ENCODE measurements at regions of chr5 and their contacts with region 1.

Region 1: DNA sequence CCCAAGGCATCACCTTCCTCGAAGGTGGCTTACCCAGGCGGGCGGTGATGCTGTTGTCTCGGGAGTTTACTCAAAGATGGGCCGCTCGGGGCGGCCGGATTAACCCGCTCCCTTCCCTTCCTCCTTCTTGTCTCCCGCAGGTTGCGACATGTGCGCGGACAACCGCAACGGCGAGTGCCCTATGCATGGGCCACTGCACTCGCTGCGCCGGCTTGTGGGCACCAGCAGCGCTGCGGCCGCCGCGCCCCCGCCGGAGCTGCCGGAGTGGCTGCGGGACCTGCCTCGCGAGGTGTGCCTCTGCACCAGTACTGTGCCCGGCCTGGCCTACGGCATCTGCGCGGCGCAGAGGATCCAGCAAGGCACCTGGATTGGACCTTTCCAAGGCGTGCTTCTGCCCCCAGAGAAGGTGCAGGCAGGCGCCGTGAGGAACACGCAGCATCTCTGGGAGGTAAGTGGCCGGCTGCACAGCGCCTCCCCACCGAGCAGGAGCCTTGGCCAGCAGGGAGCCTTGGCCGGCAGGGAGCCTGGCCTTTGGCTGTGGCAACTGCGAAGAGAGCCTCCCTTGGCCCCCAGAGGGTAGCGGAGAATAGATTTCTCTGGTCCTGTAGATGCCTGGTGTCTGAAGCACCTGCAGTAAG is 10.6 kb downstream of the PRDM6 start:
- DNase-seq: peak in 1 of 2 experiments; percentile 81
- H3K4me3 ChIP-seq: peak overlapping the region; percentile 36 to 56 (median 42)
- H3K27ac ChIP-seq: no peak overlapping the region
- H3K4me1 ChIP-seq: peaks cover 0 to 9% (median 5%) of the 10 kb centered on the region in 4 experiments; a peak in 4 of 7 replicates
- H3K27me3 ChIP-seq: peaks cover 61 to 67% (median 64%) of the 10 kb centered on the region in 4 experiments
- CTCF ChIP-seq: peak; percentile 7 to 31 (median 26); a peak in 3 of 4 replicates
- EP300 ChIP-seq: no peak
- POLR2A ChIP-seq: no peak
- RAD21 ChIP-seq: peak in 1 of 2 experiments; percentile 33; a peak in 1 of 4 replicates

Region 2: DNA sequence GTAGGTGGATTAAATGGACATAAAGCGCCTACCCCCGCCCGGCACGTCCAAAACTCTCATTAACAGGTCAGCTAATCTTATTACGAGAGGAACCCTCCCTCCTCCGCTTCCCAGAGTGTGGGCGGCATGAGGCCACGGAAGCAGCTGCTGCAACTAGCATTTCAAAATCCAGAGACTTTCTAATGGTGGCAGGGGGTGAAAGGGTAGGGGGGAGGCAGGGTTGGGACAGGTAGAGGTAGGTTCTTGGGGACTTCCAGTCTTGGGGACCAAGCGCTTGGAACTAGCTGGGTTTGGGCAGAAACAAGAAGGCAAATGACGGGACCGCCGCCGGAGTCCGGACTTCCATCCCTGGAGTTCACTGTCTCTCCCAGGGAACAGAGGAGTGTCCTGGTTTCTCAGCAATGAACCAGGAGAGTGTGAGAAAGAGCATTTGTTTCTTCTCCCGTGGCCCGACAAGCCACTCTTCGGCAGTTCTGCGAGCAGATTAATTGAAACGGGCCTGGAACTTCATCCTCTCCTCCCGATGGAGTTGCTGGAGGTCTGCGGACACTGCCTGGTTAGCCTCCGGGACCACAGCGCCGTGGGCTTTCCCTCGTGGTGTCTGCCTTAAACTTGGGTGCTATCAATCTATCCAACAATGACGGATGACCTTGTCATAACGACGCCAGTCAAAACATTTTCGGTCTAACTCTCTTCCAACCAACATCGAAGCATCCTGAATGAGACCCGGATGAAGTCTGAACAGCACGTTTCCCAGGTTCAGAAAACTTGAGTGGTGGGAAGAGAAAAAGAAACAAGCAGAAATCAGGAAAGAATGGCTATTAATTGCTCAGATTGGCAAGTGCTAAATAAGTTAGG is 12.2 kb before region 1 on chr5:
- CTCF ChIA-PET with region 1: interaction called, 21 read pairs
- POLR2A ChIA-PET with region 1: interaction called, 6 read pairs
- DNase-seq: peak in 1 of 2 experiments; percentile 64
- H3K4me3 ChIP-seq: peak overlapping the region; percentile 41 to 71 (median 48); a peak in 6 of 8 replicates
- H3K27ac ChIP-seq: no peak overlapping the region
- H3K4me1 ChIP-seq: peaks cover 0 to 36% (median 16%) of the 10 kb centered on the region in 4 experiments; a peak in 6 of 7 replicates
- H3K27me3 ChIP-seq: peaks cover 65 to 98% (median 80%) of the 10 kb centered on the region in 4 experiments
- CTCF ChIP-seq: no peak
- EP300 ChIP-seq: no peak
- POLR2A ChIP-seq: no peak
- RAD21 ChIP-seq: no peak

Region 3: GRCh38 chr5:123119334-123119986 is 19.8 kb after region 1 on chr5:
- CTCF ChIA-PET with region 1: interaction called, 10 read pairs
- POLR2A ChIA-PET with region 1: no interaction called
- DNase-seq: peak; percentile 68 to 69
- H3K4me3 ChIP-seq: peak overlapping the region in 1 of 4 experiments; percentile 44; a peak in 1 of 8 replicates
- H3K27ac ChIP-seq: no peak overlapping the region
- H3K4me1 ChIP-seq: peaks cover 0 to 3% (median 0%) of the 10 kb centered on the region in 4 experiments; a peak in 3 of 7 replicates
- H3K27me3 ChIP-seq: no peaks in the 10 kb centered on the region
- CTCF ChIP-seq: peak; percentile 43 to 57 (median 54)
- EP300 ChIP-seq: peak in 1 of 2 experiments; percentile 35; a peak in 1 of 3 replicates
- POLR2A ChIP-seq: no peak
- RAD21 ChIP-seq: peak; percentile 61 to 63

Region 4: DNA sequence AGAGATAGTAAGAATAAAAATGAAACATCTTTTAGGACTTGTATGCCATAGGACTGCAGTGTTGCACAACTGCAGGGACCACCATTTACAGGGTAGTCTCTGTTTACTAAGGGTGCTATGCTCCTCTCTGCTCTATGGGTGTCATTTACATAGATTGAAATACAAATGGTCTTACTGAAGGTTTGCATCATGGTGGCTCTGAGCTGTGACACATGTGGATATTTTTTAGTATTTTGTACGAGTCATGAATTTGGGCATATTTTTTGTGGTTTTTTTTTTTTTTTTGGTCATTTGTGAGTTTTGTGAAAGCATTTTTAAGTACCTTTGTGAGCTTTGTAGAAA is 459.8 kb after region 1 on chr5:
- CTCF ChIA-PET with region 1: no interaction called
- POLR2A ChIA-PET with region 1: no interaction called
- DNase-seq: no peak
- H3K4me3 ChIP-seq: peak overlapping the region in 1 of 4 experiments; percentile 4; a peak in 1 of 8 replicates
- H3K27ac ChIP-seq: no peak overlapping the region
- H3K4me1 ChIP-seq: peaks cover 0 to 2% (median 0%) of the 10 kb centered on the region in 4 experiments; a peak in 1 of 7 replicates
- H3K27me3 ChIP-seq: no peaks in the 10 kb centered on the region
- CTCF ChIP-seq: no peak
- EP300 ChIP-seq: no peak
- POLR2A ChIP-seq: no peak
- RAD21 ChIP-seq: no peak

Measured in H1 (cell line).